ENCODE measurements at regions of chr15 and their contacts with region 1.

Region 1: DNA sequence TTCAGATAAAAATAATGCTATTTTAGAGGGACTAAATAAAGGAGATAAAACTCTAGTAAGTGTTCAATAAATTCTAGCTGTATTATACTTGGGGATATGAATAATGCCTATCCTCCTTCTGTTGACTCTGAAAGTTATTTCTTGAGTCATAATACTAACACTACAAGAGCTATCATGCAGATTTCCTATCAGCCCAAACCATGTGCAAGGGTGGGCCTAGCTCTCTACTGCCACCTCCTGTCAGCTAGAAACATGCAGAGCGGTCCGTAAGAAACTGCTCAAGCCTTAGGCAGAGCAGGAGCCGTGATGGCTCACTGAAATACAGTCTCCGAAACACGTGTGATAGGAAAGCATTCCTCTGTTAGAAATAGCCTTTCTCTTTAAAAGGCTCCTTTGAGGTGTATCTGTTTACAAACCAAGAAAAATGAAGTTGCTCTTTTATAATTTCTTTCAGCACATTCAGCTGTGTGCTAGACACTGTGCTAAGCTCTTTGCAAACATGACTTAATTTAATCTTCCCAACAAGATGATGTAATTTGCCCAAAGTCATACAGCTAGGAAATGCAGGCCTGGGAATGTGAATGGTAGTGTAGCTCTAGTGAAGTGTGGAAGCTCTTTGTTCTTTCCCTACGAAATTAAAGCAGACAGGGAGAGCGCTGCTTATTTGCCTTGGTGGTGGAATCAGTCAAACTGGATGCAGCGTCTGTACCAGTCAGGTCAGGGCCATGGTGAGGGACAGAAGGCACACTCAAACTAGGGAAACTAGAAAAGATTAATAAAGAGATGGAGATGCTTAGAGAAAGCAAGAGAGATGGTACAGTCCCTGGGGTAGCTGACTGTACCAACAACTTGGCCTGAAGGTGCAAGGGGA is 43.1 kb downstream of the MTHFS start:
- DNase-seq: peak; percentile 84
- ATAC-seq: peak; percentile 98
- H3K4me3 ChIP-seq: no peak overlapping the region
- H3K27ac ChIP-seq: no peak overlapping the region
- H3K4me1 ChIP-seq: no peaks in the 10 kb centered on the region
- H3K27me3 ChIP-seq: no peaks in the 10 kb centered on the region
- CTCF ChIP-seq: peak; percentile 98

Region 2: DNA sequence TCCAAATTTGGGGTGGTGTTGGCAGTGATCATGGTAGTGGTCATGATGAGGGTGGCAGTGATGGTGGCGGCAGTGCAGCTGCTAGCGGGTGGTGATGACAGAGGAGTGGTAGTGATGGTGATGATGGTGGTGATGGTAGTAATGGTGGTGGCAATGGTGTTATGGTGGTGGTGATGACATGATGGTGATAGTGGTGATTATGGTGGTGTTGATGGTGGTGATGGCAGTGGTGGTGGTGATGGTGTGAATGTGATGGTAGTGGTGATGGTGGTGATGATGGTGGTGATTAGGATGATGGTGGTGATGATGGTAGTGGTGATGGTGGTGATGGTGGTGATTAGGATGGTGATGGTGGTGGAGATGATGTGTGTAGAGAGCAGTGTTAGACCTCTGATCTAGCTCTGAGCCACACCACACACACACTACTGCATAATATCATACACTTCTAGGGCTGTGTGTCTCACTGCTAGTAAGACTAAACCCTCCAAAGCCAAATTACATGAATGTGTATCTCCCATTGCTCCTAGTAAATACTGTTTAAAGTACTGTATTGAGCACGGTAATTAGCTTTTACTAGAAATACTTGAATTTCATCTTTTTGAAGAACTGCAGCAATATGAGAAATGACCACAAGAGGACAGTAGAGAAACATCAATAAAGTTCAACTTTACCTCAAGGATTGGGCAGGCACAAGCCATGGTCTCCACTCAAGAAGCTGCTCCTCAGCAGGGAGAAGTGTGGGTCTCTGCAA is 514.0 kb before region 1 on chr15:
- CTCF ChIA-PET with region 1: no interaction called
- POLR2A ChIA-PET with region 1: no interaction called
- in situ Hi-C with region 1: no loop called
- intact Hi-C with region 1: loop called (anchors 10 kb)
- DNase-seq: peak; percentile 36
- ATAC-seq: peak; percentile 62; the same call in 1 of the 2 replicates
- H3K4me3 ChIP-seq: no peak overlapping the region
- H3K27ac ChIP-seq: no peak overlapping the region
- H3K4me1 ChIP-seq: no peaks in the 10 kb centered on the region
- H3K27me3 ChIP-seq: no peaks in the 10 kb centered on the region
- CTCF ChIP-seq: peak; percentile 89

Region 3: GRCh38 chr15:79380755-79381497 is 472.8 kb before region 1 on chr15:
- CTCF ChIA-PET with region 1: interaction called, 19 read pairs
- POLR2A ChIA-PET with region 1: no interaction called
- in situ Hi-C with region 1: no loop called
- intact Hi-C with region 1: loop called (anchors 5 kb)
- DNase-seq: peak; percentile 66
- ATAC-seq: peak; percentile 99
- H3K4me3 ChIP-seq: no peak overlapping the region
- H3K27ac ChIP-seq: no peak overlapping the region
- H3K4me1 ChIP-seq: no peaks in the 10 kb centered on the region
- H3K27me3 ChIP-seq: no peaks in the 10 kb centered on the region
- CTCF ChIP-seq: peak; percentile 90

Region 4: DNA sequence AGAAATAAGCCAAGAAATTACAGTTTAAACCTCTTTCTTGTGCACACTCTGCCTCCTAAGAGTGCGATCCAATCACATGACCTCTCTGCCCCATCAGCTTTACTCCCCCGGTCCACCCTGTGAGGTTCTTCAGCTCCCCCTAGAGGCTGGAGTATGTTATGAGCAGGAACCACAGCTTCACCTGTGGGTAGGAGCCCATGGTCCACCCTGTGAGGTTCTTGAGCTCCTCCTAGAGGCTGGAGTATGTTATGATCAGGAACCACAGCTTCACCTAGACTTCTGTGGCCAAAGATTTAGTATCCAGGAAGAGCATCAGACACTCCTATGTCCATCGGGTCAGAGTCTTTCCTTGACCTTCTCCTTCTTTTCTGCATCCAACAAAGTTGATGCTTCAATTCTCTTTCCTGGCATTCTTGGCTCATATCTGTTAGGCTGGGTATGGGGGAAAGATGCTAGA is 257.6 kb before region 1 on chr15:
- CTCF ChIA-PET with region 1: interaction called, 10 read pairs
- POLR2A ChIA-PET with region 1: no interaction called
- in situ Hi-C with region 1: no loop called
- intact Hi-C with region 1: no loop called
- DNase-seq: peak; percentile 77
- ATAC-seq: peak; percentile 98
- H3K4me3 ChIP-seq: no peak overlapping the region
- H3K27ac ChIP-seq: no peak overlapping the region
- H3K4me1 ChIP-seq: no peaks in the 10 kb centered on the region
- H3K27me3 ChIP-seq: peaks cover 7% of the 10 kb centered on the region
- CTCF ChIP-seq: peak; percentile 99

Region 5: GRCh38 chr15:79773128-79773527 is 80.6 kb before region 1 on chr15:
- CTCF ChIA-PET with region 1: no interaction called
- POLR2A ChIA-PET with region 1: no interaction called
- in situ Hi-C with region 1: no loop called
- intact Hi-C with region 1: loop called (anchors 5 kb)
- DNase-seq: no peak
- ATAC-seq: no peak
- H3K4me3 ChIP-seq: no peak overlapping the region
- H3K27ac ChIP-seq: no peak overlapping the region
- H3K4me1 ChIP-seq: no peaks in the 10 kb centered on the region
- H3K27me3 ChIP-seq: no peaks in the 10 kb centered on the region
- CTCF ChIP-seq: no peak

Region 6: GRCh38 chr15:79881254-79881653 is 27.6 kb after region 1 on chr15:
- CTCF ChIA-PET with region 1: no interaction called
- POLR2A ChIA-PET with region 1: no interaction called
- in situ Hi-C with region 1: no loop called
- intact Hi-C with region 1: no loop called
- DNase-seq: no peak
- ATAC-seq: no peak
- H3K4me3 ChIP-seq: no peak overlapping the region
- H3K27ac ChIP-seq: no peak overlapping the region
- H3K4me1 ChIP-seq: no peaks in the 10 kb centered on the region
- H3K27me3 ChIP-seq: no peaks in the 10 kb centered on the region
- CTCF ChIP-seq: no peak

Measured in Panc1 (cell line).